ENCODE measurements at regions of chr12 and their contacts with region 1.

Region 1: DNA sequence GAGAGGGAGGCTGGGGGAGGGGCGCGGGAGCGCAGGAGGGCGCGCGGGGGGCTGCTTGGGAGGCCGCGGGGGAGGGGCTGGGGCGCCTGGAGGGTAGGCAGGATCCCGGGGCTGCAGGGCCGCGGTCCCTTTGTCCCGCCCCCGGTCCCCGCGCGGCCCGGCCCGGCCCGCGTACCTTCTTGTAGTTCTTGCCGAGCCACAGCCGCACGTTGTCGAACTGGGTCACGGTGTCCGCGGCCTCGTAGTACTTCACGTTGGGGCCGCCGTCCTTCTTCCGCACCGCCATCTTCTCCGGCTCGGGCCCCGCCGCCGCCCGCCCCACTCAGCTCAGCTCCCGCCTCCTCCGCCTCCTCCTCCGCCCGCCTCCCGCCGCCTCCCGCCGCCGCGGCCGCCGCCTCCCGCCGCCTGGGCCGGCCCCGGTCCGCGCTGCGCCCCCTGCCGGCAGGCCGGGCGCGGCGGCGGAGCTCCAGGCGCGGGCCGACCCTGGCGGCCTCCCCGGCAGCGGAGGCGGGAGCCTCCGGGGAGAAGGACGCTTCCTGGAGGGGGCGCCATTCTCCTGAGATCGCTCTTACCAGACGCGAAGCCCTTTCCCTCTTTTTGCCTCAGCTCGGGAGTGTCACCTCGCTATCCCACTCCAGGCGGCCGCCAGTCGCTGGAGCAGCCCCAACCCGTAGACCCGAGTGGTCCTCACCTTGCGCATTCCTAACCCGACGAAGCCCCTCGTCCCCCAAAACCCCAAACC is at the start of gene SMARCC2:
- DNase-seq: no peak
- H3K4me3 ChIP-seq: peak within 1 kb of the TSS; percentile 82
- CTCF ChIP-seq: peak; percentile 87

Region 2: GRCh38 chr12:55996715-55997534 is 192.4 kb before region 1 on chr12 and contains the start of gene SUOX:
- CTCF ChIA-PET with region 1: interaction called, 10 read pairs
- POLR2A ChIA-PET with region 1: no interaction called
- DNase-seq: peak; percentile 85
- H3K4me3 ChIP-seq: peak within 1 kb of the TSS; percentile 93
- CTCF ChIP-seq: no peak

Region 3: DNA sequence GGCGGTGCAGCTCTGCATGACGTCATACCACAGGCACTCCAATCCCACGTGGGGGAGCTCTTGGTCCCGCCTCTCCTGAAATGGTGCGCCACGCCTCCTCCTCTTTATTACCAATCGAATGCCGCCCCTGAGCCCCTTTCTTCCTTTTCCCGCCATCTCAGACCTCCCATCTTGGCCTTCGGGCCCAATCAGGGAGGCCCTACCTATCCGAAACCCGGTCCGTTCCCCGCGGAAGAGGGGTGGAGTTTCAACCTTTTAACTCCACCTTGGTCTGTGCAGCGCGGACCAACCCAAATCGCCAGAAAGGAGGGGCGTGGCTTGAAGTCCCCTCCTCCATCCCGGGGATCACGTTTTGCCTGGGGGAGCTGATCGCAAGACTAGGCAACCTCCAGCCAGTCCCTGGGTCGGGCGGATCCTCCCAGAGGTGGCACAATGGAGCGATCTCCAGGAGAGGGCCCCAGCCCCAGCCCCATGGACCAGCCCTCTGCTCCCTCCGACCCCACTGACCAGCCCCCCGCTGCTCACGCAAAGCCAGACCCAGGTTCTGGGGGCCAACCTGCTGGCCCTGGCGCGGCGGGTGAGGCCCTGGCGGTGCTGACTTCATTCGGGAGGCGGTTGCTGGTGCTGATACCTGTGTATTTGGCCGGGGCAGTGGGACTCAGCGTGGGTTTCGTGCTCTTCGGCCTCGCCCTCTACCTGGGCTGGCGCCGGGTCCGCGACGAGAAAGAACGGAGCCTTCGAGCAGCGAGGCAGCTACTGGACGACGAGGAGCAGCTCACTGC is 61.3 kb before region 1 on chr12 and contains the start of gene ESYT1:
- CTCF ChIA-PET with region 1: interaction called, 311 read pairs
- POLR2A ChIA-PET with region 1: interaction called, 27 read pairs
- DNase-seq: peak; percentile 98
- H3K4me3 ChIP-seq: peak within 1 kb of the TSS; percentile 78
- CTCF ChIP-seq: no peak

Region 4: GRCh38 chr12:56172831-56173230 is 16.5 kb before region 1 on chr12:
- CTCF ChIA-PET with region 1: interaction called, 83 read pairs
- POLR2A ChIA-PET with region 1: interaction called, 3 read pairs
- DNase-seq: no peak
- H3K4me3 ChIP-seq: no peak overlapping the region
- CTCF ChIP-seq: no peak

Region 5: GRCh38 chr12:56212361-56212760 is 23.0 kb after region 1 on chr12:
- CTCF ChIA-PET with region 1: interaction called, 74 read pairs
- POLR2A ChIA-PET with region 1: interaction called, 3 read pairs
- DNase-seq: no peak
- H3K4me3 ChIP-seq: no peak overlapping the region
- CTCF ChIP-seq: no peak

Region 6: GRCh38 chr12:56258057-56258819 is 68.9 kb after region 1 on chr12 and contains the start of gene ANKRD52:
- CTCF ChIA-PET with region 1: interaction called, 72 read pairs
- POLR2A ChIA-PET with region 1: interaction called, 3 read pairs
- DNase-seq: no peak
- H3K4me3 ChIP-seq: peak within 1 kb of the TSS; percentile 80
- CTCF ChIP-seq: peak; percentile 72

Region 7: GRCh38 chr12:56425193-56425592 is 235.8 kb after region 1 on chr12:
- CTCF ChIA-PET with region 1: no interaction called
- POLR2A ChIA-PET with region 1: no interaction called
- DNase-seq: no peak
- H3K4me3 ChIP-seq: no peak overlapping the region
- CTCF ChIP-seq: no peak

Region 8: GRCh38 chr12:56677680-56678079 is 488.3 kb after region 1 on chr12:
- CTCF ChIA-PET with region 1: no interaction called
- POLR2A ChIA-PET with region 1: no interaction called
- DNase-seq: no peak
- H3K4me3 ChIP-seq: no peak overlapping the region
- CTCF ChIP-seq: no peak